Posterior vena cava (tissue), 2 donors: ENCODE measurements at regions of chr1 and their contacts with region 1.

Region 1: GRCh38 chr1:48697066-48697707 is 79.5 kb downstream of the BEND5 start:
- DNase-seq: peak; percentile 89

Region 2: DNA sequence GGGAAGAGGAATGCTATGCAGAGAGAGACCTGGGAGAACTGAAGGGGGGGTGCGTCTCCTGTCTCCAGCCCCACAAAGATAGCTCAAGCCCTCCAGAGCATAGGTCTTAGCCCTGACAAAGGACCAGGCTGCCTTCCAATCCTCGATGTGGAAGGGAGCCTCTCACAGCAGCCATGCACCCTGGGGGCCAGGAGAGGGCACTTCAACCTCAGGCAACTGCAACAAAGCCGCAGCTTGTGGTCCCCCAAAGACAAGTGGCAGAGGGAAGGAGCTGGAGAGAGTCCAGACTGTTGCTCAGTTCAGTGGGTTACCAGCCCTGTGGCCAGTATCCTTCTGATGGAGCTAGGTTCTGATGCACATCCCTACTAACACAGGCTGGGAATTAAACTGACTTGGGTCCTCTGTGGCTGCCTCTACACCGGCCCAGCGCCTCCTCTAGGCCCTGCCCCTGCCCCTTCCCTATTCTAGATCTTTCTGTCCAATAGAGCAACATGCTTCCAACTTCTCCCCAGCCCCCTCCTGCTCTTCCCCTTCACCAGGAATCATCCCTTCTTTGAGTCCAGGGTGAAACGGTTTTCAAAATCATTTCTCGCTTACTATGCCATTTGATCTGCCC is 124.4 kb before region 1 on chr1:
- intact Hi-C with region 1: loop called in 1 of 2 experiments (anchors 5 kb)
- DNase-seq: peak; percentile 86